Activated B cell treated with CpG ODN at 0.5 μM for 24 hours (primary cell): ENCODE measurements at regions of chr10 and their contacts with region 1.

Region 1: DNA sequence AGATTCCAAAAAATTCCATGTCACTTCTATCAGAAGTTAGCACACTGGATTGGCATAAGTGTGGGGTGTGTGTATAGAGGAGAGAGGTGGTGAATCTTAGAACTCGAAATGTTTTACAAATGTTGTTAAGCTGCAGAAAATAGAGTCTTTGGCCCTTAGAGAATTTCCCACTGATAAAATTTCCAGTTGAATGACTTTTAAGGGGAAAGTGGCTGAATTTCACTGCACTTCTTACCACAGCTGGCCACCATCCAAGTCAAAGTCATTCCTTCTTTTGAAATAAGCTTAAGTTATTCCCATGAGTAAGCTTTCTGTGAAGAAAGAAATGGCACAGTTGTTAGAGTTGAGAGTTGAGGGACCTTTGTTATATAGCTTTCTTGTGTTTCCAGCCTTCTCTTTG is 13.9 kb downstream of the VCL start:
- DNase-seq: no peak
- ATAC-seq: no peak
- H3K4me3 Mint-ChIP-seq: no peak overlapping the region
- H3K27ac Mint-ChIP-seq: no peak overlapping the region
- H3K4me1 Mint-ChIP-seq: peaks cover 61% of the 10 kb centered on the region
- H3K27me3 Mint-ChIP-seq: no peaks in the 10 kb centered on the region
- CTCF ChIP-seq: no peak

Region 2: GRCh38 chr10:74047868-74048267 is 36.1 kb after region 1 on chr10:
- CTCF ChIA-PET with region 1: no interaction called
- POLR2A ChIA-PET with region 1: no interaction called
- intact Hi-C with region 1: loop called (anchors 5 kb)
- DNase-seq: no peak
- ATAC-seq: no peak
- H3K4me3 Mint-ChIP-seq: no peak overlapping the region
- H3K27ac Mint-ChIP-seq: no peak overlapping the region
- H3K4me1 Mint-ChIP-seq: peaks cover 33% of the 10 kb centered on the region
- H3K27me3 Mint-ChIP-seq: no peaks in the 10 kb centered on the region
- CTCF ChIP-seq: no peak